H1 (cell line): ENCODE measurements at regions of chr6 and their contacts with region 1.

Region 1: GRCh38 chr6:56708810-56709597 is 66.3 kb upstream of the DST start:
- DNase-seq: no peak
- H3K4me3 ChIP-seq: no peak overlapping the region
- H3K27ac ChIP-seq: no peak overlapping the region
- H3K4me1 ChIP-seq: peaks cover 0 to 8% (median 7%) of the 10 kb centered on the region in 4 experiments; a peak in 5 of 7 replicates
- H3K27me3 ChIP-seq: no peaks in the 10 kb centered on the region
- CTCF ChIP-seq: peak in 1 of 3 experiments; percentile 42; a peak in 2 of 4 replicates
- EP300 ChIP-seq: no peak
- POLR2A ChIP-seq: no peak
- RAD21 ChIP-seq: peak in 1 of 2 experiments; percentile 44; a peak in 3 of 4 replicates

Region 2: GRCh38 chr6:56671651-56672461 is 37.1 kb before region 1 on chr6:
- CTCF ChIA-PET with region 1: no interaction called
- POLR2A ChIA-PET with region 1: no interaction called
- DNase-seq: no peak
- H3K4me3 ChIP-seq: no peak overlapping the region
- H3K27ac ChIP-seq: no peak overlapping the region
- H3K4me1 ChIP-seq: no peaks in the 10 kb centered on the region
- H3K27me3 ChIP-seq: no peaks in the 10 kb centered on the region
- CTCF ChIP-seq: no peak
- EP300 ChIP-seq: no peak
- POLR2A ChIP-seq: no peak
- RAD21 ChIP-seq: no peak

Region 3: DNA sequence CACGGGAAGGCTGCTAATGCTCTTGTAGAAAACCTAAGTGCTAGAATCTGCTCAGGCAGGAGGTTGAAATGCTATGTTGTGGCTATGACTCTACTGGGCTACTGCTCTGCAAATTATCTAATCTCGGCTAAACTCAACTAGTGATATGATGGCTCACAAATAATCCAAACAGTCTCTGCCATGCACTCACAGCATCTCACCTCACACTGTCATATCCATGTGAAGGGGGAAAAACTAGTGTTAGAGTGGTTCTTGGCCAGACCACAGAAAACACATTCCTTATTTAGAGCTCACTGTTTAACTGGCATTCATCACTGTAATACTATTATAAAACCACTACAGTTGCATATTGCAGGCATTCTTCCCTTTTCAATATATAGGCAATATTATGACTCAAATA is 15.5 kb after region 1 on chr6:
- CTCF ChIA-PET with region 1: interaction called, 13 read pairs
- POLR2A ChIA-PET with region 1: interaction called, 3 read pairs
- DNase-seq: no peak
- H3K4me3 ChIP-seq: no peak overlapping the region
- H3K27ac ChIP-seq: no peak overlapping the region
- H3K4me1 ChIP-seq: peaks cover 4 to 12% (median 9%) of the 10 kb centered on the region in 4 experiments; a peak in 6 of 7 replicates
- H3K27me3 ChIP-seq: peaks cover 0 to 2% (median 0%) of the 10 kb centered on the region in 4 experiments; a peak in 1 of 7 replicates
- CTCF ChIP-seq: no peak
- EP300 ChIP-seq: no peak
- POLR2A ChIP-seq: no peak
- RAD21 ChIP-seq: no peak

Region 4: GRCh38 chr6:56752009-56752408 is 43.0 kb after region 1 on chr6:
- CTCF ChIA-PET with region 1: interaction called, 102 read pairs
- POLR2A ChIA-PET with region 1: no interaction called
- DNase-seq: no peak
- H3K4me3 ChIP-seq: no peak overlapping the region
- H3K27ac ChIP-seq: no peak overlapping the region
- H3K4me1 ChIP-seq: peaks cover 2 to 17% (median 14%) of the 10 kb centered on the region in 4 experiments
- H3K27me3 ChIP-seq: no peaks in the 10 kb centered on the region
- CTCF ChIP-seq: no peak
- EP300 ChIP-seq: no peak
- POLR2A ChIP-seq: no peak
- RAD21 ChIP-seq: no peak

Region 5: GRCh38 chr6:56843573-56844349 is 134.8 kb after region 1 on chr6:
- CTCF ChIA-PET with region 1: interaction called, 71 read pairs
- POLR2A ChIA-PET with region 1: no interaction called
- DNase-seq: peak; percentile 79 to 92
- H3K4me3 ChIP-seq: peak overlapping the region; percentile 91 to 98 (median 94)
- H3K27ac ChIP-seq: peak overlapping the region; percentile 59; the same call in 1 of the 2 replicates
- H3K4me1 ChIP-seq: peaks cover 0 to 12% (median 5%) of the 10 kb centered on the region in 4 experiments; a peak in 2 of 7 replicates
- H3K27me3 ChIP-seq: no peaks in the 10 kb centered on the region
- CTCF ChIP-seq: peak; percentile 66 to 73 (median 70)
- EP300 ChIP-seq: no peak
- POLR2A ChIP-seq: peak; percentile 35 to 69; a peak in 2 of 3 replicates
- RAD21 ChIP-seq: peak; percentile 63 to 68

Region 6: GRCh38 chr6:56890683-56891429 is 181.9 kb after region 1 on chr6:
- CTCF ChIA-PET with region 1: no interaction called
- POLR2A ChIA-PET with region 1: no interaction called
- DNase-seq: no peak
- H3K4me3 ChIP-seq: no peak overlapping the region
- H3K27ac ChIP-seq: no peak overlapping the region
- H3K4me1 ChIP-seq: no peaks in the 10 kb centered on the region
- H3K27me3 ChIP-seq: no peaks in the 10 kb centered on the region
- CTCF ChIP-seq: no peak
- EP300 ChIP-seq: no peak
- POLR2A ChIP-seq: no peak
- RAD21 ChIP-seq: no peak